Spleen (tissue), 13 donors: ENCODE measurements at regions of chr7 and their contacts with region 1.

Region 1: GRCh38 chr7:31758755-31759154 is 71.7 kb downstream of the PPP1R17 start:
- DNase-seq: no peak
- H3K4me3 ChIP-seq: no peak overlapping the region
- H3K27ac ChIP-seq: no peak overlapping the region
- H3K4me1 ChIP-seq: no peaks in the 10 kb centered on the region
- H3K27me3 ChIP-seq: no peaks in the 10 kb centered on the region
- CTCF ChIP-seq: no peak
- POLR2A ChIP-seq: no peak

Region 2: DNA sequence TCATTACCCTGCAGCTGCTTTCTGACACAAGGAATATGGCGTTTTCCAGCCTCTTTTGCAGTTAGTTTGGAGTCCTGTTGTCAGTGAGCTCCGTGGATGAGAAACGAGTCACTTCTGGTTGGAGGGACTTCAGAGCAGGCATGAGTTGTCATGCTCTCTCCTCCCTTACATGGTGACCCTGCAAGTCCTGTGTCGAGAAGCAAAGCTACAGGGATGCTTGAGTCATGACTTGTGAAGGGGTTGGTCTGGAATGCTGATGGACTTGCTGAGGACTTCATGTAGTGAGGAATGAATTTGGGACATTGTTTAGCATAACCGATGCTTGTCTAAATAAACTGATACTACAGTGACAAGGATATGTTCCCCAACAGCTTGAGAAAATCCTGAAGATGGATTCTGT is 597.8 kb before region 1 on chr7:
- intact Hi-C with region 1: no loop called
- DNase-seq: no peak
- H3K4me3 ChIP-seq: no peak overlapping the region
- H3K27ac ChIP-seq: no peak overlapping the region
- H3K4me1 ChIP-seq: no peaks in the 10 kb centered on the region
- H3K27me3 ChIP-seq: peaks cover 0 to 8% (median 0%) of the 10 kb centered on the region in 7 donors
- CTCF ChIP-seq: no peak
- POLR2A ChIP-seq: no peak

Region 3: GRCh38 chr7:31796375-31796774 is 37.6 kb after region 1 on chr7:
- intact Hi-C with region 1: no loop called
- DNase-seq: no peak
- H3K4me3 ChIP-seq: no peak overlapping the region
- H3K27ac ChIP-seq: no peak overlapping the region
- H3K4me1 ChIP-seq: no peaks in the 10 kb centered on the region
- H3K27me3 ChIP-seq: no peaks in the 10 kb centered on the region
- CTCF ChIP-seq: no peak
- POLR2A ChIP-seq: no peak

Region 4: DNA sequence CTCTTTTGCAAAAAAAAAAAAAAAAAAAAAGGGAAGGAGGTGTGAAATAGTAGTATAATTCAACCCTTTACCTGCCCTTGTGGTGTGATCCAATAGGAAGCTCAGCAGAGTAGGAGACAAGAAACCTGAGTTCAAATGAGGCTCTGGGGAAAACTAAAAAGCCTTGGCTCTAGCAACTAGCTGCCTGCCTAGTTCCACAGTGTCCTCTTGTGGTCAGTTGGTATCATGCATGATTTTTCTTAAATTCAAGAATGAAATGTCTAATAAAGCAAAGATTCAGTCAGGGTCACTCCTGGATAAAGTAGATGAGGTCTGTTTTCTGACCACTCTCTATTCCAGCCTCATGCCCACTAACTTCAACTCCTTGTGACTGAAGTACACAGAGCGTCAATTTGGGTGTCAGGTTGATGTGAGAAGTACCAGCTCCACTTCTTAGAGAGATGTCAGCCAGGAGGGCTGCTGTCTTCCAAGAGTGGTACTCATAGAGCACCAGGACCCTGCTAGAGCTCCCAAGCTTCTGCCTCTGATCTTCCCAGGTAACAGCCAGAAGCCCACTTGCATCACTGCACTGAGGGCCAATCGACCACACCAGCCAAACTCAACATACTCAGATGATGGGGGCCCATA is 720.9 kb after region 1 on chr7:
- intact Hi-C with region 1: loop called (anchors 10 kb)
- DNase-seq: no peak
- H3K4me3 ChIP-seq: no peak overlapping the region
- H3K27ac ChIP-seq: no peak overlapping the region
- H3K4me1 ChIP-seq: no peaks in the 10 kb centered on the region
- H3K27me3 ChIP-seq: no peaks in the 10 kb centered on the region
- CTCF ChIP-seq: peak in 7 of 11 experiments; percentile 11 to 50 (median 36)
- POLR2A ChIP-seq: no peak